ENCODE measurements at regions of chr10 and their contacts with region 1.

Region 1: GRCh38 chr10:15897287-15897686 is 37.0 kb upstream of the MINDY3 start:
- DNase-seq: no peak
- H3K4me3 ChIP-seq: no peak overlapping the region
- CTCF ChIP-seq: no peak

Region 2: DNA sequence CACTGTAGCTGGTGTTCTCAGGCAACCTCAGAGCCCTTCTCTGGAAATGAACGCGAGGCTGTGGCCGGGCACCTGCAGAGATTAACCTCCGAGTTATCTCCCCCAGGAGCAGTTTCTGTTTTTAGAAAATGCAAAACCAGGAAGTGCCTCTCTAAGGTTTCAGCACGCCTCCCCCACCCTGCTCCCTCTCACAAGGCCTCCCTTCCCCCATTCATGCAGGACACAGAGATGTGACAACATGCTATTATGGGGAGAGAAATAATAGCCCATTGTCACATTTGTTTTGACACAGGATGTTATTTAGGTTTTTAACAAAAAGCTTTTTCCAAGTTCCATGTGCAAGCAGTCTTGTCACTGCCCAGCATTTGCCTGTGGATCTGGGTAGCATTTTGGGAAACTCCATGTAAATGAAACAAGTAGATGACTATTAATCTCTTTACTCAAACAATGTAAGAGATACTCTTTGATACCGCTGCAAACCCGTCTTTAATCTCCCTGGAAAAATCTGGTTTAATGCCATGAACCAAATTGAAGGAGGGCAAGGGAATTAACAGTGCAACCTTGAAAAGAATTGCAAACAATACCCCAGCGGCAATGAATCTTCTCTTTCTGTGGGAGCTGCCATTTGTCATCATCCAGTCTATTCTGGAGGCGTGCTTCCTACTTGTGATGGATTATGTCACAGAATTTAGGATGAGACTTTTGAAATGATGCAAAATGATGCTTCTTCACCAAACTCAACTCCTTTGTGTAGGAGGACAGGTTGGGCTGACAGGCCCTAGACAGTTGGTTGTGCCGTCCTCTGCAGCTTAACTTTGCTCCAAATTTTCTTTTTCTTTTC is 642.3 kb before region 1 on chr10:
- CTCF ChIA-PET with region 1: no interaction called
- POLR2A ChIA-PET with region 1: no interaction called
- DNase-seq: no peak
- H3K4me3 ChIP-seq: no peak overlapping the region
- CTCF ChIP-seq: no peak

Region 3: GRCh38 chr10:15763006-15763405 is 134.3 kb before region 1 on chr10:
- CTCF ChIA-PET with region 1: no interaction called
- POLR2A ChIA-PET with region 1: no interaction called
- DNase-seq: no peak
- H3K4me3 ChIP-seq: no peak overlapping the region
- CTCF ChIP-seq: no peak

Region 4: GRCh38 chr10:15879058-15879457 is 18.2 kb before region 1 on chr10:
- CTCF ChIA-PET with region 1: interaction called, 20 read pairs
- POLR2A ChIA-PET with region 1: no interaction called
- DNase-seq: no peak
- H3K4me3 ChIP-seq: no peak overlapping the region
- CTCF ChIP-seq: peak; percentile 28

Region 5: GRCh38 chr10:16545116-16545736 is 647.9 kb after region 1 on chr10:
- CTCF ChIA-PET with region 1: interaction called, 34 read pairs
- POLR2A ChIA-PET with region 1: no interaction called
- DNase-seq: no peak
- H3K4me3 ChIP-seq: no peak overlapping the region
- CTCF ChIP-seq: peak; percentile 69

Region 6: DNA sequence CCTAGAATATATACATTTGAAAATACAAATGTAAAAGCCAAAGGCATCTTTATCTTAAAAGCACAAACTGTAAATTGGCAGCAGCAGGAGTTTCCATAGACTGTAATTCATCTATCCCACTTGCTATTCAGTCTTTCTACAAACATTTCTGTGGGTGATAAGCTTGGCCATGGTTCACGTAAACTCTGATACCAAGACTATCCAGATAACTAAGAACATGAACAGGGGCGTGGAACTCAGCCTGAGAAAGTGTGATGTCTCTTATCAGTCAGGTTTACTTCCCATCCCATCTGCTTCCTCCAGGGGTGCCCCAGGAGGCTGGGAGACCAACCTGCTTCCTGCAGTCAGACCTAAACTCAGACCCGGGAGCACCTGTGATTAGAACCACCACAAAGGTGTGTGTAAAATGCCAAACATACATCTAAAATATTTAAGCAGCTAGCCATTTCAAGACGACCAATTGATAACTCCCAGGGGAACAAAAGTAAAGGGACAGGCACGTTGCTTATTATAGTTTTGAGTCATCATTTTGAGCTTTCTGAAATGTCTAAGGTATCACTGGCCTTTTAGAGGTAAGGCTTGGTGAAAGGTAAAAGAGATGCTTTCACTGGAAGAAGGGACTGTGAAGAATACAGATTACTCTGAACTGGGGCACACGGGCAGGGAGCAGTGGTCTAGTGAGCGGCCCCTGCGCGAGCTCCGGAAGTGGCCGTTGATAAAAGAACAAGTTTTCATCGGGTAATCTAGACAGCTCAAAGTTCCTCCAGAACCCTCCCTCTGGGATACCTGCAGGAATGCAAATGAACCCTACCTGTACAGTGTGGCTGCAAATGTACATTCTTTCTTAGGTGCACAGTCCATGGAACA is 868.5 kb after region 1 on chr10:
- CTCF ChIA-PET with region 1: interaction called, 12 read pairs
- POLR2A ChIA-PET with region 1: no interaction called
- DNase-seq: no peak
- H3K4me3 ChIP-seq: no peak overlapping the region
- CTCF ChIP-seq: no peak